Breast epithelium (tissue), 4 donors: ENCODE measurements at regions of chr6 and their contacts with region 1.

Region 1: DNA sequence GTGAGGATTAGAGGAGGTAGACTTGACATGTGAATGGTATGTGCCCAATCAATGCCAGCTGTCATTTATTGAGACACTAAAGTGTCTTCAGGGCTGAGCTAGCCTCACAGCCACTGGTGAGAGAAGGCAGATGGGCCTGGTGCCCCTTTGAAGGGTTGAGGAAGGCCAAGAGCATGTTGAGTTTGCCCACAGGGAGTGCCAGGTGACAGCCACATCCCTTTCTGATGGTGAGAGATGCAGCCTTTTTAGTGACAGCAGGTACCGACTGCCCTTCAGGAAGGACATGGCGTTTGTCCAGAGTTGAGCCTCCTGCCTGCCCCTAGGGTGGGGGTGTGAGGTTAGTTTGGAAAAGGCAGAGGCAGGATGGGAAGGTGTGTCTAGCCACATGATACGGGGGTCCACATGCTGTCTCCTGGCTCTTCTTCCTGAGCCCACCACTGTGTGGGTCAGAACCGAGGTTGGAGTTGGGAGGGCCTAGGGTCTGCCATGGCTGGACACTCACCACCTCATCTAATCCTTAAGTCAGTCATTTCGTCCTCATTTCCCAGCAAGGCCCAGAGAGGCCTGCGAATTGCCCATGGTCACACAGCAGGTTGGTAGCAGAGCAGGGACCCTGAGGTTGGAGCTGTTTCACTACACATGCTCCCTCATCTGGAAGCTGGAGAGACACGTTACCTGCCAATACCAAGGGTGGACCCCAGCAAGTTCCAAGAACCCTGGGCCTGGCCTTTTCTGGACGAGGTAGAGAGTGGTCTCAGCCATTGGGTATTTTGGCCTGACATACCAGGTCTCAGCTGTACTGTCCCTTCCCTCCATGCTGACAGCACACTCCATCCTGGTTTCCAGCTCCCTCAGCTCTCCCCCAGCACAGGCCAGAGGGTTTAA is 32.4 kb downstream of the SPDEF start:
- DNase-seq: no peak
- H3K4me3 ChIP-seq: no peak overlapping the region
- H3K27ac ChIP-seq: no peak overlapping the region
- H3K4me1 ChIP-seq: peaks cover 0 to 5% of the 10 kb centered on the region in 2 donors
- H3K27me3 ChIP-seq: no peaks in the 10 kb centered on the region
- CTCF ChIP-seq: no peak
- POLR2A ChIP-seq: no peak

Region 2: GRCh38 chr6:33958526-33959333 is 565.0 kb before region 1 on chr6:
- intact Hi-C with region 1: no loop called
- DNase-seq: no peak
- H3K4me3 ChIP-seq: no peak overlapping the region
- H3K27ac ChIP-seq: no peak overlapping the region
- H3K4me1 ChIP-seq: no peaks in the 10 kb centered on the region
- H3K27me3 ChIP-seq: no peaks in the 10 kb centered on the region
- CTCF ChIP-seq: no peak
- POLR2A ChIP-seq: no peak

Region 3: GRCh38 chr6:34568341-34568680 is 44.6 kb after region 1 on chr6:
- intact Hi-C with region 1: loop called (anchors 1 kb)
- DNase-seq: no peak
- H3K4me3 ChIP-seq: no peak overlapping the region
- H3K27ac ChIP-seq: no peak overlapping the region
- H3K4me1 ChIP-seq: no peaks in the 10 kb centered on the region
- H3K27me3 ChIP-seq: peaks cover 0 to 7% of the 10 kb centered on the region in 2 donors
- CTCF ChIP-seq: no peak
- POLR2A ChIP-seq: no peak